ENCODE measurements at regions of chr2 and their contacts with region 1.

Region 1: GRCh38 chr2:211455216-211455841 is 898.9 kb downstream of the CPS1 start:
- DNase-seq: peak; percentile 26
- CTCF ChIP-seq: peak; percentile 96

Region 2: DNA sequence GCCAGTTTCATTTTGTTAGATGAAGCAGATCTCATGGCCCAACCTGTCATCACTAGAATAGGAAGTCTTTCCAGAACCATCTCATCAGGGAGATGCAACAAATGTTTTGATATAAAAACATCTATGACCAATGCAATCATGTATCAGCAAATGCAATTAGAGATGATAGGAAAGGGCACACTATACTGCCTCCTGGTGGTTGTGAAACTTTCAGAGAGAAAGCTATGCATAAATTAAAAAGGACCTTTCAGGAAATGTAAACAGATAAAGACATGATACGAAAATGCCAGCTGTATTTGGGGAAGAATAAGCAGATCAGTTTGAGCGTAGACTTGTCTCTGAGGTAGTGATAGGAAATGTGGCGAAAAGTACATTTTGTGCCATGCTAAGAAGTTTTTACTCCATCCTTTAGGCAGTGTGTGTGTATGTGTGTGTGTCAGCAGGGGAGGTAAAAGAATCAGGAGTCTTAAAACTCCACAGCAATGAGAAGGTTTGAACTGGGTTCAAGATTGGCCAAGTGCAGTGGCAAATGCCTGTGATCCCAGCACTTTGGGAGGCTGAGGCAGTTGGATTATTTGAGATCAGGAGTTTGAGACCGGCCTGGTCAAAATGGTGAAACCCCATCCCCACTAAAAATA is 419.7 kb before region 1 on chr2:
- CTCF ChIA-PET with region 1: no interaction called
- POLR2A ChIA-PET with region 1: no interaction called
- DNase-seq: no peak
- CTCF ChIP-seq: peak; percentile 52

Region 3: DNA sequence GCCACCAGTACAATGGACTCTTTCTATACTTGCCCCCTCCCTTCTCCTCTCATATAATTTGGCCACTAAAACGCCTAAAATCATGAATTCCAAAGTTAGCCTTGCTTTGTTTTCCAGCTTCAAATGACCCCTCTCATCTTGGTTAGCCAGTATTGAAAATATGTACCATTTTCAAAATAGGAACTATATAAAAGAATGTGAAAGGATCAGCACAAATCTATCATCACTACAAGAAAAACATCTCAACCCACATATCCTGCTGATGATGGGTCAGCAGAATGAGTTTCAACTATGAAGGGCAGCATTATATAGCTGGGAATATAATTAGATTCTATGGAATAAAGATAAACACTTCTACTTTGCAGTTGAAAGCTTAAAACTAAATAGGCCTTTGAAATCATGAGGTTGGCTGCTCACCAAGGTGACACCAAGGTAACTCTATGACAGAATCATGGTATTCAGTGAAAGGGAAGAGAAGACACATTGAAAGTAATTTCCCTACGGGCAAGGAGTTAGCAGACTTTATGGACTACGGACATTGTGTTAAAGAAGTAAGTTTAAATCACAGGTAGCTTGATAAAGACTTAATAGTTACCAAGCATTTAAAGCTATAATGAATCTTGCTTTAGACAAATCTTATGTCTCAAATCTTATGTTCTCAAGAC is 25.9 kb before region 1 on chr2:
- CTCF ChIA-PET with region 1: interaction called, 14 read pairs
- POLR2A ChIA-PET with region 1: no interaction called
- DNase-seq: no peak
- CTCF ChIP-seq: no peak

Region 4: GRCh38 chr2:211437396-211437795 is 17.9 kb before region 1 on chr2:
- CTCF ChIA-PET with region 1: interaction called, 27 read pairs
- POLR2A ChIA-PET with region 1: no interaction called
- DNase-seq: no peak
- CTCF ChIP-seq: no peak

Region 5: GRCh38 chr2:211766717-211767116 is 311.4 kb after region 1 on chr2:
- CTCF ChIA-PET with region 1: no interaction called
- POLR2A ChIA-PET with region 1: no interaction called
- DNase-seq: no peak
- CTCF ChIP-seq: no peak